ENCODE measurements at regions of chr11 and their contacts with region 1.

Region 1: GRCh38 chr11:87437844-87438223 is 400.1 kb downstream of the TMEM135 start:
- DNase-seq: peak; percentile 92
- ATAC-seq: peak; percentile 95
- H3K4me3 ChIP-seq: no peak overlapping the region
- H3K27ac ChIP-seq: peak overlapping the region; percentile 3; the same call in 1 of the 2 replicates
- H3K4me1 ChIP-seq: peaks cover 27% of the 10 kb centered on the region
- H3K27me3 ChIP-seq: no peaks in the 10 kb centered on the region
- CTCF ChIP-seq: no peak

Region 2: GRCh38 chr11:87391496-87391895 is 46.3 kb before region 1 on chr11:
- CTCF ChIA-PET with region 1: interaction called, 10 read pairs
- POLR2A ChIA-PET with region 1: no interaction called
- intact Hi-C with region 1: no loop called
- DNase-seq: no peak
- ATAC-seq: no peak
- H3K4me3 ChIP-seq: no peak overlapping the region
- H3K27ac ChIP-seq: no peak overlapping the region
- H3K4me1 ChIP-seq: no peaks in the 10 kb centered on the region
- H3K27me3 ChIP-seq: no peaks in the 10 kb centered on the region
- CTCF ChIP-seq: no peak

Region 3: DNA sequence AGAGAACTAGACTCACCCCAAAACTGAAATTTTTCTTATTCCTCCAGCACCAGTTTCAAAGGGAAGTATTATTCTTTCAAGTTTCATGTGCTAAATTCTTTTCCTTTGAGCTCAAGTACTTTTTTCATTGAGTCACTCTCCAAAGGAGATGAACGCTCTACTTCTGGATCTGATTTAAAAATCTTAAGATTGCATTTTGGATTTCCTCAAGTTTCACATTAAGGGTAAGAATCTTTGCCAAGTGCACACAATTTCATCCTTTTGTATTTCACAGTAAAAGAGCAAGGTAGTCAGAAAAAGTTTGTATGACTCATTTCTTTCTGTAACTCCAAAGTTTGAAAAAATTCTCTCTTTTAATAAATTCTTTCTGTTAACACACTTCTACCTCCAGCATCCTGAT is 301.9 kb after region 1 on chr11:
- CTCF ChIA-PET with region 1: no interaction called
- POLR2A ChIA-PET with region 1: no interaction called
- intact Hi-C with region 1: no loop called
- DNase-seq: no peak
- ATAC-seq: peak; percentile 9; the same call in 1 of the 2 replicates
- H3K4me3 ChIP-seq: no peak overlapping the region
- H3K27ac ChIP-seq: no peak overlapping the region
- H3K4me1 ChIP-seq: no peaks in the 10 kb centered on the region
- H3K27me3 ChIP-seq: no peaks in the 10 kb centered on the region
- CTCF ChIP-seq: no peak

Region 4: GRCh38 chr11:89015614-89016013 is 1577.8 kb after region 1 on chr11:
- CTCF ChIA-PET with region 1: interaction called, 13 read pairs
- POLR2A ChIA-PET with region 1: no interaction called
- intact Hi-C with region 1: no loop called
- DNase-seq: no peak
- ATAC-seq: no peak
- H3K4me3 ChIP-seq: no peak overlapping the region
- H3K27ac ChIP-seq: no peak overlapping the region
- H3K4me1 ChIP-seq: no peaks in the 10 kb centered on the region
- H3K27me3 ChIP-seq: no peaks in the 10 kb centered on the region
- CTCF ChIP-seq: no peak